ENCODE measurements at regions of chr21 and their contacts with region 1.

Region 1: DNA sequence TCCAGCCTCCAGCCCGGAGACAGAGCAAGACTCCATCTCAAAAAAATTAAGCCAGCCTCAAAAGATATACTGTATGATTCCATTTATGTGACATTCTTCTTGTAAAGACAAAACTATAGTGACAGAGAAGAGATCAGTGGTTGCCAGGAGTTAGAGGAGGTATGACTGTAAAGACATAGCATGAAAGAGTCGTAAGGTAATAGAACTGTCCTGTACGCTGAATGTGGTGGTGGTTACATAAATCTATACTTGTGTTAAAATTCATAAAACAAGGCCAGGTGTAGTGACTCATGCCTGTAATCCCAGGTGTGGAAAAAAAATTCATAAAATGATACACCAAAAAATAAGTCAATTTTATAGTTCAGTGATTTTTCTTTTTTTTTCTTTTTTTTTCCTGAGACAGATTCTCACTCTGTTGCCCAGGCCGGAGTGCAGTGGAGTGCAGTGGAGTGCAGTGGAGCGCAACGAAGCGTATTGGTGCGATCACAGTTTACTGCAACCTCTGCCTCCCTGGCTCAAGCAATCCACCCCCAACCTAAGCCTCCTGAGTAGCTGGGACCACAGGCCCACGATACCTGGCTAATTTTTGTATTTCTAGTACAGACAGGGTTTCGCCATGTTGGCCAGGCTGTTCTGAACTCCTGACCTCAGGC is 84.9 kb upstream of the CXADR start:
- DNase-seq: no peak

Region 2: GRCh38 chr21:17488620-17489019 is 60.7 kb after region 1 on chr21:
- intact Hi-C with region 1: loop called in 1 of 2 experiments (anchors 10 kb)
- DNase-seq: no peak

Region 3: DNA sequence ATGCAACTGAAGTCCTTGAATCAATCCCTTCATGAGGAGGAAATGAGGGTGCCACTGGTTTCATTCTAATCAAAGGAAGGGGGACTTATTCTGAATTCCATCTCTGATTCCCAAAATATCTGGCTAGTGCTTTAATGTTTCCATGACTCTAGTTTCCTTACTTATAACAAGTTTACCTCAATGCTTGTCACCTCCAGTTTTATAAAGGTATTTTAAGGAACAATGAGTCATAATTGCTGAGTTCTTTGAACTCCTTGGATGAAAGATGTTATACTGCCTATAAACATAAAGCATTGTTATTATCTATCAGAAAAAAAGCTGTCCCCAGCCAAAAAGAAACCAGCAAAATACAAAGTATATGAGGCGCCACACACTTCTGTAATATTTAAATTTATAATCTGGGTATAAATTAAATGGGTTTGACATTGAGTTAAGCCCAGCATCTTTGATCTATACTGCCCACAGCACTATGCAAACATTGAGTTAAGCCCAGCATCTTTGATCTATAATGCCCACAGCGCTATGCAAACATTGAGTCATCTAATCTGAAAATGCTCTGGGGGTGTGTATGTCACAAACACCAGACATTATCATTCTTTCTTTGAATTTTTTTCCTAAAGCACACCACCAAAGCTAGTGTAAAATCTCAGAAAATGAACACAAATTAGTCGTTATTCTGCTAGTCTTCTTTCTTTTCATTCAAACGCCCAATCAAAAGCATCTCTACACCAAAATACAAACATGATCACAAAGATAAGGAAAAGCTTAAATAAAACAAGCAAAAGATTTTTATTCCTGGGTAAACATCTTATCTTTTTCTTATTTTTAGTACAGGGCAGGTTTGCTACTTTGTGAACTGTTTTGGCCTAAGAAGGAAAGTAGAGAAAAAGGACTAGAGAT is 73.4 kb after region 1 on chr21:
- intact Hi-C with region 1: no loop called
- DNase-seq: no peak

Measured in posterior vena cava (tissue), 2 donors.